Gastrocnemius medialis (tissue), 4 donors: ENCODE measurements at regions of chr2 and their contacts with region 1.

Region 1: DNA sequence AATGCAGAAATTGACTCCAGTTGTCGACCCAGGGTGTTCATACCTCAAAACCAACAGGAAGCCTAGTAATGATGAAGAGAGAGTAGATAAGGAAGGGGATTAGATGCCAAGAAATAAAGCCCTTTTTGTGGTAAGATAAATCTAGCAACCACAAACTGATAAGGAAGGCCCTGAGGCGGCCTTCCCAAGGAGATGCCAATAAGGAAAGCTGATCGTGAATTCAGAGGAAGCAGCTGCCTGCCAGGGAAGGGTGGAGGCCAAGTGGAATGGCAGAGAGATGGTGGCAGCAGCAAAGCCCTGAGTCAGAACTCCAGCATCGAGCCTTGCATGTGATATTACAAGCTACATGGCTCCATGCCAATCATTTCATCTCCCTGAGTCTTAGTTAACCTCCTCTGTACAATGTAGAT is 126.3 kb downstream of the IRS1 start:
- DNase-seq: peak; percentile 61 to 66
- ATAC-seq: peak; percentile 85 to 87
- H3K4me3 ChIP-seq: no peak overlapping the region
- H3K27ac ChIP-seq: peak overlapping the region; percentile 20 to 70 (median 46)
- H3K4me1 ChIP-seq: peaks cover 26 to 34% of the 10 kb centered on the region in 2 donors
- H3K27me3 ChIP-seq: no peaks in the 10 kb centered on the region
- CTCF ChIP-seq: no peak
- POLR2A ChIP-seq: no peak

Region 2: DNA sequence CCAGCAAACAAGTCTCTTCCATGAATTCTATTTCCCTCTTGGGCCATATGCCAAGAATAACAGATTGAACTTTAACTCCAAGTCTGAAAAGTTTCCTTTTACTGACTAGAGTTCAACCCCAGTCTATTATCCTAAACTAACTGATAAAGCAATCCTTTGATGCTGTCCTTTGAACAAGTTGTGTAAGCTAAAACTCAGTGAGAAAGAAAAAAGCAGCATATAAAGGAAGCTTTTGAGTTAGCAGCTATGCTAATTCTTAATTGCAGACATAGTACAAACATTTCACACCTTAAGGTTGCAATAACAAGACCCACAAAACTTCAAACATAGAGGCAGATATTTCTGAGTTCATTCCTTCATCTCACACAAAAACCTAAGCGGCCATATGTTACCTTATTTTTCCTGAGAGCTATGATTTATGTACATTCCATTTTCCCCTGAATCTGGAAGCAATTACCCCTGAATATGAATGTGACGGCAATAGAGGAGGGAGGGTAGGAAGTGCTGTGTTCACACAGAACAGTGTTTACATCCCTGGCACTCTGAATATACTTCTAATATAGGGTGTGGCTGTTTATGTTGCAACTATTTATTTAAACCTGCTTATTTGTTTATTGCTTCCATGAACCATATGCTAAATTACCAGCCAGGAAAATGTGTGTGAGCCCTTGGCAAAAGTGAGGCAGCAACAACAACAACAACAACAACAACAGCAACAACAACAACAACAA is 54.3 kb before region 1 on chr2:
- in situ Hi-C with region 1: no loop called
- intact Hi-C with region 1: no loop called
- DNase-seq: no peak
- ATAC-seq: no peak
- H3K4me3 ChIP-seq: no peak overlapping the region
- H3K27ac ChIP-seq: no peak overlapping the region
- H3K4me1 ChIP-seq: peaks cover 11 to 12% of the 10 kb centered on the region in 2 donors
- H3K27me3 ChIP-seq: no peaks in the 10 kb centered on the region
- CTCF ChIP-seq: no peak
- POLR2A ChIP-seq: no peak

Region 3: DNA sequence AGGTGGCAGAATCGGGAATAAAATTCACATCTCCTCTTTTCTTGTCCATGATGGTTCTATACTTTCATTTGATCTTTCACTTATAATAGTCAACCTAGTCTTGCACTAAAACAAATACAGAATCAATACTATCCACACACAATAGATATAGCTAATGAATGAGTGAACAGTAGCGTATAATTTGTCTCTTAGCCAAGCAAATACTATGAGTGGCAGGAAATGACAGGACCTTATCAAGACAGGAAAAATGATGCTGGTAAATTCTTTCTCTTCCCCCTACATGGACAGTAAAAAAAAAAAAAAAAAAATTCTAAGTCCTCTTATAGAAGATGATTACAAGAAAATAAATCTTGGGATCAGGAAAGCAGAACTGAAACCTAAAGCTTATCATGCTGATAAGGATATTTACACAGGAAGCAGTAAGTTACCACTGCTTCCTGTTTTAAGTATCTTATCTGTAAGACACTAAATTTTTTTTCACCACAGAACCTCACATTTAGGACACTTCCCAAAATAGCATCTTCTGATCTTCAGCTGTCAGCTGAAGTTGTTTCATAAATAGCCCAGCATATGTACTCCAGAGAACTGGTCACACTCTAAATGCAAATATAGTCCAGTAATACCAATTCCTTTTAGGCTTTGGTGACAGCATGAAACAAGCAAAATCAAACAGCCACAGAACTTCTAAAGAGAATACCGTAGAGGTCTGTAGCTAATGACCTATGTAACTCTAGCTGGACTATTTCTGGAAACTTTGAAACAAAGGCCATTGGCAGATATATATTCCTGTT is 99.3 kb after region 1 on chr2:
- in situ Hi-C with region 1: loop called in 3 of 4 experiments (anchors 10 to 25 kb)
- intact Hi-C with region 1: no loop called
- DNase-seq: no peak
- ATAC-seq: peak; percentile 15 to 20
- H3K4me3 ChIP-seq: peak overlapping the region; percentile 22 to 40 (median 26)
- H3K27ac ChIP-seq: peak overlapping the region; percentile 82 to 91 (median 83)
- H3K4me1 ChIP-seq: peaks cover 55 to 59% of the 10 kb centered on the region in 2 donors
- H3K27me3 ChIP-seq: no peaks in the 10 kb centered on the region
- CTCF ChIP-seq: no peak
- POLR2A ChIP-seq: peak in 1 of 2 donors; percentile 17